Activated B cell treated with CpG ODN at 0.5 μM for 24 hours (primary cell): ENCODE measurements at regions of chr3 and their contacts with region 1.

Region 1: GRCh38 chr3:50550079-50550741 is 17.3 kb downstream of the C3orf18 start:
- DNase-seq: peak; percentile 51
- ATAC-seq: peak; percentile 70
- H3K4me3 Mint-ChIP-seq: no peak overlapping the region
- H3K27ac Mint-ChIP-seq: no peak overlapping the region
- H3K4me1 Mint-ChIP-seq: no peaks in the 10 kb centered on the region
- H3K27me3 Mint-ChIP-seq: no peaks in the 10 kb centered on the region
- CTCF ChIP-seq: no peak

Region 2: DNA sequence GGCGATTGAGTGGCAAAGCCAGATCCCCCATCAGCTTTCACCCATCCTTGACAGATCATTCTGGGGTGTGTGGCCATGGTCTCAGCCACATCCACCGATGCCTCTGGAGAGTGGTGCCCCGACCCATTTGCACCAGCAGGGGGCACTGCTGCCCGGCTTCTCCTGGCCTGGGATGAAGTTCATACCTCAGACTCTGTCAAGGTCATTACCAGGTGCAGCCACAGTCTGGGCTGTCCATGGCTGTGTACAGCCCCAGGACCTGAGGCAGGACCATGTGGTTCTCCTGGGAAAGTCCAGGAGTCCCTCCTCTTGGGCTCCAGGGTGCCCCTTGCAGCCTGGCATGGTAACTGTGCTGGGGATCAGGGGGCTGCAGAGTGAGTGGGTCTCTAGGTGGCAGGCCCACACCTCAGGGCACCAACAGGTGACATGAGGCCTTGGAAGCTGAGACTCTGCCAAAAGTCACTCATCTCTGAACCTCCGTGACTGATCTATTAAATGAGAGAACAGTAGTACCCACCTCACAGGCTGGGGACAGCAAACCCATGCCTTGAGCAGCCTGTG is 114.0 kb before region 1 on chr3:
- CTCF ChIA-PET with region 1: no interaction called
- POLR2A ChIA-PET with region 1: no interaction called
- intact Hi-C with region 1: loop called (anchors 1 kb)
- DNase-seq: peak; percentile 64
- ATAC-seq: peak; percentile 86
- H3K4me3 Mint-ChIP-seq: no peak overlapping the region
- H3K27ac Mint-ChIP-seq: no peak overlapping the region
- H3K4me1 Mint-ChIP-seq: no peaks in the 10 kb centered on the region
- H3K27me3 Mint-ChIP-seq: peaks cover 4% of the 10 kb centered on the region
- CTCF ChIP-seq: no peak